ENCODE measurements at regions of chr14 and their contacts with region 1.

Region 1: GRCh38 chr14:74401504-74402241 is 24.3 kb downstream of the SYNDIG1L start:
- DNase-seq: peak; percentile 45
- ATAC-seq: peak; percentile 92
- H3K4me3 ChIP-seq: peak overlapping the region; percentile 61; the same call in 1 of the 2 replicates
- H3K27ac ChIP-seq: peak overlapping the region; percentile 69
- H3K4me1 ChIP-seq: peaks cover 26% of the 10 kb centered on the region
- H3K27me3 ChIP-seq: peaks cover 0 to 3% of the 10 kb centered on the region in 2 experiments; a peak in 3 of 4 replicates
- CTCF ChIP-seq: no peak
- EP300 ChIP-seq: no peak
- POLR2A ChIP-seq: peak; percentile 48
- RAD21 ChIP-seq: no peak

Region 2: DNA sequence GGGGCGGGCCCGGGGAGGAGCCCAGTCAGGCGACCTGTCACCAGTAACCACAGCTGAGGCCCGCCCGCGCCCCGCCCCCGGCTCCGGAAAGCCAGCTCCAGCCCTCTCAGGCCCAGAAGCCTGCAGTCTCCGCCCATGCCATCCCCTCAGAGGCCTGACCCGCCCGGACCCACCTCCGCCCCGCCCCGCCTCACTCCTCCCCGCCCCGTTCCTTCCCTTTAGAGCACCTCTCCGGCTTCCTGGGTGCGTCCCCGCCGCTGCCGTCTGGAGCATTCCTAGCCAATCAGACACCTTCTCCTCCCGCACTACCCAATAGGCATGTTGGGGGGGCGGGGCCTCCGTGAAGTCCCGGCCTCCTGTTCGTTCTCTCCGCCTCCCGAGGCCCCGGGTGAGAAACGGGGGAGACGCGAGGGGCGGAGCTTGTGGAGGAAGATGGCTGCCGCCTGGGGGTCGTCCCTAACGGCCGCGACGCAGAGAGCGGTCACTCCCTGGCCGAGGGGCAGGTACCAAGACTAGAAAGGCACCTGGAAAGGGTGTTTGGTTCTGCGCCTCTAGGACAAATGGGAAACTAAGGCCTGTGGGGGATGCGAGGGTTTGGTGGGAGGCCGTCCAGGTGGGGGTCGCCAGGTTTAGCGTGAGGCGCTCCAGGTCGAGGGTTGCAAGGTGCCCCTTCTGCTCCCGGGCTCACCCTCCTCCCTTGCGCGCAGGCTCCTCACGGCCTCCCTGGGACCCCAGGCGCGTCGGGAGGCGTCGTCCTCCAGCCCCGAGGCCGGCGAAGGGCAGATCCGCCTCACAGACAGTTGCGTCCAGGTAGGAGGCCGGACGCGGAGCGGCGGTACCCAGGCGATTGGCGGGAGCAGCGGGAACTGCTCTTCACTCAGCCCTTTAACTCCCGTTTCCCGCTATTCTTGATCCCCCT is 91.9 kb after region 1 on chr14 and contains the start of gene ISCA2:
- CTCF ChIA-PET with region 1: interaction called, 3 read pairs
- POLR2A ChIA-PET with region 1: interaction called, 9 read pairs
- RAD21 ChIA-PET with region 1: interaction called, 16 read pairs
- SMC1A ChIA-PET with region 1: interaction called, 5 read pairs
- in situ Hi-C with region 1: no loop called
- intact Hi-C with region 1: no loop called
- DNase-seq: peak; percentile 97
- ATAC-seq: peak; percentile 94
- H3K4me3 ChIP-seq: peak within 1 kb of the TSS; percentile 98
- H3K27ac ChIP-seq: peak within 1 kb of the TSS; percentile 72
- H3K4me1 ChIP-seq: peaks cover 7% of the 10 kb centered on the region
- H3K27me3 ChIP-seq: no peaks in the 10 kb centered on the region
- CTCF ChIP-seq: no peak
- EP300 ChIP-seq: no peak
- POLR2A ChIP-seq: peak; percentile 85
- RAD21 ChIP-seq: no peak
- polyA plus RNA-seq, gene ISCA2: 7.5 to 22.5 TPM